ENCODE measurements at regions of chrX and their contacts with region 1.

Region 1: DNA sequence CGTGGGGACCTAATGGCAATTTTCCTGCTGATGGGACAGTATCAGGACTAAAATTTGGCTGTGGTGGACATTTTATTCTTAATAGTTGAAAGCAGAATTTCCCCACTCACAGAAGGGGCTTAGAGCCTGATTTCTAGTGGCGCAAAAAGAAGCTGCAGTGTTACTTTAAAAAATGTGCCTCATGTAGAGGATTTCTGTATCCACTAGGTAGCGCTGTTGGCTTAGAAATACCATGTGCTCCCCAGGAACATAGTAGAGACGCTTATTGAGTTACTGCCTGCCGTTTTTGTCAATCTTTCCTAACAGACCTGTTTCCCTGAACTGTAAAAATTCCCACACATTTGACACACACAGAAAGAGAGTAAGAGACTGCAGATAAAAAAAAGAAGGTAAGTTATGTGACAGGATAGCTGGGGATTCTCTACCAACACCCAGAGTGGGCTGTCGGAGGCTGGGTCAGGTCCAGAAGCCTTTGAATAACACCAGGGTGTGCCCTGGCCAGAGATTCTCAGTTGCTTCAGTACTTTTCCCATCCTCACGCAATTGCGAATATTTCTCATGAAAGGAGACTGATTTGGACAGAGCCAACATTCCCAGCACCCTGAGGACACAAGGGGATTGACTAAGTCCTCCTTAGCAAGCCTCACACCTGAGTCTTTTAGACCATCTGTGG is 88.4 kb downstream of the ZXDA start:
- DNase-seq: peak; percentile 9
- H3K4me3 Mint-ChIP-seq: no peak overlapping the region
- H3K27ac Mint-ChIP-seq: no peak overlapping the region
- H3K4me1 Mint-ChIP-seq: peaks cover 2% of the 10 kb centered on the region
- H3K27me3 Mint-ChIP-seq: no peaks in the 10 kb centered on the region

Region 2: DNA sequence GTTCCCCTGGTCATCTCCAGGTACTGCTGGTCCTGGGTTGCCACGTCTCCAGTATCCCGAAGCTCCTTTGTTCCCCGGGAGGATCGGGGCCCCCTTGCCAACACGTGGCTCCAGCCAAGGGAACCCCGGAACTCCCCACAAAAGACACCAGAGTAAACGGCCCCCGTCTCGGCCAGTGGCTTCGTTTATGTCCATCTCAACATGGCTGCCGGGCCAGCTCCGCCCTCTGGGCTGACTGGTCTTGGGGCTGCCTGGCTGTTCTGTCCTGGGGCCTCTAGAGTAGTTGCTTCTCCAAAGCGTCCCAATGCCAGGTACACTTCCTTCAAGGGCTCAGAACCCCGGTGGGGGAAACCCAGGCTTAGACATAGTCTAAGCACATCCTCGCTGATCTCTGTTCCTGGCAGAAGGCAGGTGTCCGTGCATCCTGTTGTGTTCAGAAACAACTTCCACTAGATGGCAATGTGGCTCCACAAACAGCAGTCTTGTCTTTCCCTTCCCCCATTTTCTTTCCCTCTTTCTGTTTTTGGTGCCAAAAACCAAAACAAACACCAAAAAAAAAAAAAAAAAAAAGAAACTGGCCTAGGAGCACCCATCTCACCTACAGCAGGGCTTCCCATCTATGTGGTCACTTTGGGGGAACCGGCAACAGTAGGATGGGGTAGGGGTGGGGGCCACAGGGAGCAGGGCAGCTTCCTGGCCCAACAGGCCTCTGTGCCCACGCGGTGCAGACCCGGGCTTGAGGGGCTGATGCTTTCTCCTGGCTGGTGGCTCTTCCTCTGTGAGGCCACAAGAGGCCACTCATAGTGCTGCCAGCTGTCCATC is 1057.5 kb before region 1 on chrX:
- CTCF ChIA-PET with region 1: no interaction called
- POLR2A ChIA-PET with region 1: no interaction called
- intact Hi-C with region 1: loop called (anchors 10 kb)
- DNase-seq: peak; percentile 75
- H3K4me3 Mint-ChIP-seq: peak overlapping the region; percentile 72
- H3K27ac Mint-ChIP-seq: peak overlapping the region; percentile 90
- H3K4me1 Mint-ChIP-seq: peaks cover 49% of the 10 kb centered on the region
- H3K27me3 Mint-ChIP-seq: no peaks in the 10 kb centered on the region

Region 3: DNA sequence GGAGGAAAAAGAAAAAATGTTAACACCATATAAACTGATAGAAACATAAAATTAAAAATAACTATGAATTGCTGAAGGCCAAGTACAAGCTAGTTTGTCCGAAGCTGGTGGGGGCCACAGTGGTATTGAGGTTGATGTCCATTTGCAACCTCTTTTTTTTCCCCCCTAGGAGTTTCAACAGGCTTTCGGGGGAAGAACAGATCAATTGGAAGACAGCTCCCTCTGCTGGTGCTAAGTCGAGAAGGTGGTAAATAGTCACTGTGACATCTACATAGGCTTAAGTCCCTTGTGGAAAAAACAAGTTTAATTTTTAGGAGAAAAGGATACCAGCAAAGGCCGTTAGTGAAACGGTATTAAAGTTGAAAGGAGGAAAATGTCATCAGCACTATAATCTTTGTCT is 204.1 kb after region 1 on chrX:
- CTCF ChIA-PET with region 1: interaction called, 47 read pairs
- POLR2A ChIA-PET with region 1: no interaction called
- intact Hi-C with region 1: loop called (anchors 2 kb)
- DNase-seq: peak; percentile 21
- H3K4me3 Mint-ChIP-seq: no peak overlapping the region
- H3K27ac Mint-ChIP-seq: no peak overlapping the region
- H3K4me1 Mint-ChIP-seq: peaks cover 2% of the 10 kb centered on the region
- H3K27me3 Mint-ChIP-seq: no peaks in the 10 kb centered on the region

Region 4: DNA sequence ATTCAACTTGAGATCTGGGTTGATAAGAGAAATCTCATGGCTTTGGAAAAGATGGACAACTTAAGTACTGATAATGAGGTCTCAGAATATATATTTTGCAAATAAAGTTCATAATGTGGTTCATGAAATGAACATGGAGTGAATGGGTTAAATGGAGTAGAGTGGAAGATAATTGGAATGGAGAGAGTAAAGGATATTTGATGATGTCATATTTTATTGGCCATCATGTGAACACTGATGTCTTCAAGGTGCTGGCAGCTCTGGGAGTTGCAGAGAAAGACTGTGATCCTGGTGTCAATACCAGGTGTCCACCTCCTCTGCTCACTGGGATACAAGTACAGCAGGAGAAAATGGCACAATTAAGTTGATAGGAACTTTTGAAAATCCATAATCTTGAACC is 222.3 kb after region 1 on chrX:
- CTCF ChIA-PET with region 1: no interaction called
- POLR2A ChIA-PET with region 1: no interaction called
- intact Hi-C with region 1: no loop called
- DNase-seq: no peak
- H3K4me3 Mint-ChIP-seq: no peak overlapping the region
- H3K27ac Mint-ChIP-seq: no peak overlapping the region
- H3K4me1 Mint-ChIP-seq: no peaks in the 10 kb centered on the region
- H3K27me3 Mint-ChIP-seq: peaks cover 2% of the 10 kb centered on the region

Measured in activated CD4-positive, alpha-beta memory T cell treated with anti-CD3 and anti-CD28 coated beads for 36 hours (primary cell).